Body of pancreas (tissue), 4 donors: ENCODE measurements at regions of chr13 and their contacts with region 1.

Region 1: DNA sequence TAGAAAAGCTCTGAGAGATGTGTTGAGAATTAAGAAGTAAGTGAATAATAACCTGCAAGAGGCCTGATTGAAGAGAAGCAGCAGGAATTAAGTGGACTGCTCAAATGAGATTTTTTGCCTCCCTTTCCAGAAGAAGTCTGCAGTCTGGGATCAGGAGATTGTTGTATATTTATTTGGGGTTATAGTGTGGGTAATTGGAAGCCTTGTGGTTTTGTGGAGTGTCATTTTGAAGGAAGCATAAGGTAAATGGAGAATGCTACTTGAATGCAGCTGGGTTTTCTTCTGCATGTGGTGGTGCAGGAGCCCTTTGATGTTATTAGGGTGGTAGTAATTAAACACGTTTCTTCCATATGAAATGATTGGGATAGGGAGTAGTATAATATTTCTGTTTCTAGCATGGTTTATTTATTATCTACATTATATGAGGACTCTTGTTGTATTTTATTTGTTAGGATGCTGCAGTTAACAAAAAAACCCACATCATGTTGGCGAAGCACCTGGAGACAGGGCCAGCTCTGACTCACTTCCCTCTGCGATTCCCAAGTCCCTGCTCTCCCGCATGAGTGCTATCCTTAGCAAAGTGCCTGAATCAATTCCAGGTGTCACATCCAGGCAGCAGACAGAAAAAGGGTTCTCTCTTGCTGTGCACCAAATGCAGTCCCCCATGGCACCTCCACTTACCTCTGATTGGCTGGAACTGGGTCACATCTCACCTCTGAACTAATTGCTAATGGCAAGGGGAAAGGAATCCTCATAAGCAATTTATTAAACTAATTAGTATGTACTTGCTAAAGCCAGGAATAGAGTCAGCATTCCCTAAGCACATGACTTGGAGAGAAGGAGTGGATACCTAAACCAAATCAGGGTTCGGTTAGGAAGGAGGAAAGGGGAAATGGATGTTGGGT is 54.8 kb downstream of the DGKH start:
- DNase-seq: no peak
- ATAC-seq: no peak
- H3K4me3 ChIP-seq: no peak overlapping the region
- H3K27ac ChIP-seq: no peak overlapping the region
- H3K4me1 ChIP-seq: peaks cover 15% of the 10 kb centered on the region
- H3K27me3 ChIP-seq: no peaks in the 10 kb centered on the region
- CTCF ChIP-seq: no peak
- POLR2A ChIP-seq: no peak

Region 2: GRCh38 chr13:41678249-41678648 is 425.0 kb before region 1 on chr13:
- intact Hi-C with region 1: loop called (anchors 10 kb)
- DNase-seq: no peak
- ATAC-seq: no peak
- H3K4me3 ChIP-seq: no peak overlapping the region
- H3K27ac ChIP-seq: no peak overlapping the region
- H3K4me1 ChIP-seq: no peaks in the 10 kb centered on the region
- H3K27me3 ChIP-seq: no peaks in the 10 kb centered on the region
- CTCF ChIP-seq: no peak
- POLR2A ChIP-seq: no peak

Region 3: DNA sequence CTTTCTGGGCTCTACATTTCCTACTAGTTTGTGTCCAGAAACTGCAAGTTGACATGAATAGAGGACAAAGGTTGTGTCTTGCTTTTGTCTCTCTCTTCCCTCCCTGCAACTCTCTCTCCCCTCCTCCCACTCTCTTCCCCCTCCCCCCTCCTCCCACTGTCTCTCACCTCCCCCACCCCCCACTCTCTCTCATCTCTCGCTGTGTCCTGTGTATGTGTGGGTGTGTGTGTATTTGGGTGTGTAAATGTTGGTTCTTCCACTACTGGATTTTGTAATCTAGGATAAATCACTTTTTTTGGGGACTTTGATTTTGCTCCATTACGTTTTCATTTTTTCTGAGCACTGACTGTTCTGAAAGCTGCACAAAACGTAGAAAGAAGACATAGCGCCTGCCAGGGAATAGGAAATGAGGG is 217.2 kb after region 1 on chr13:
- intact Hi-C with region 1: no loop called
- DNase-seq: no peak
- ATAC-seq: no peak
- H3K4me3 ChIP-seq: no peak overlapping the region
- H3K27ac ChIP-seq: no peak overlapping the region
- H3K4me1 ChIP-seq: no peaks in the 10 kb centered on the region
- H3K27me3 ChIP-seq: no peaks in the 10 kb centered on the region
- CTCF ChIP-seq: no peak
- POLR2A ChIP-seq: no peak